AG04449 (cell line): ENCODE measurements at regions of chr4 and their contacts with region 1.

Region 1: DNA sequence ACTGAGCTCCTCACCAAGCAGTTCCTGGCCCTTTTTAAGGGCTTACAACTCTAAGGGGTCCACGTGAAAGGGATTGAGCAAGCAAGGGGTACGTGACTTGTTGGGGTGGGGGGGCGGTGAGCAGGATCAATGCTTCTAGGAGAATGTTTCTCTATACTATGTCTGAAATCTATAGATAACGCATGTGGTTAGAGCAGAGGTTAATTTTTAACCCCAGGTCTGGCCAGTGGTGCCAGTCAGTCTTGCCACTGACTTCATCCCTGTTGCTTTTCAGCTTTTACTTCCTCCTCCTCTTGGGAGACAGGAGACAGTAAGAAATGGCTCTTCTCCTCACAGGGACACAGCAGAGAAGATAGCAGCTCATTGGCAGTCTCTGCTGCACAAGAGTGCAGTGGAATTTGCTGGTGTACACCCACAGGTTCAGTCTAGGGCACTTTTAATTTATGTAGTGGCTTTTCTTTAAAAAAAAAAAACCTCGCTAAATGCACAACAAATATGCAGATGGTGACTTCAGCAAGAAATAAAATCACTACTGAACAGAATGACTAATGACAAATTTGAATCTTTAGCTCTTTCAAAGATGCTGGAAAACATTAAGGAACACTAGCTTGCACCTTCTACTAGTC is 190.4 kb downstream of the CCNG2 start:
- DNase-seq: no peak
- H3K4me3 ChIP-seq: no peak overlapping the region
- CTCF ChIP-seq: no peak

Region 2: DNA sequence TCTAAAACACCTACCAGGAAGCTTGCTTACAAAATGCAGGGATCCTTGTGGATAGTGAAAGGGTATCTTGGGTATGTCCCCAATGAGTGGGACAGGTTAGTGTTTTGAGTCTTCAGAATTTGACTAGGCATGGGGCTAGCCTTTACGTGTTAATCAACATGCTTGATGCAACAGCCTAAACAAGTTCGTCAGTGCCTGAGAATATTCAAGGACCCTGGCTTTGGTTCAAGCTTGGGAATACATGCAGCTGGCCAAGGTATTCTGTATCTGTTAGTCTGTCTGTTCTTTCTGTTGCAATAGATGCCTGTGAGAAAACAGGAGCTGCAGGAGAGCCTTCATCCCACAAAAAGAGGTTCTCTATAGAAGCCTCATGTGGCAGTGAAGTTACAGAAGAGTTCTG is 41.0 kb before region 1 on chr4:
- CTCF ChIA-PET with region 1: no interaction called
- POLR2A ChIA-PET with region 1: no interaction called
- DNase-seq: no peak
- H3K4me3 ChIP-seq: no peak overlapping the region
- CTCF ChIP-seq: no peak

Region 3: DNA sequence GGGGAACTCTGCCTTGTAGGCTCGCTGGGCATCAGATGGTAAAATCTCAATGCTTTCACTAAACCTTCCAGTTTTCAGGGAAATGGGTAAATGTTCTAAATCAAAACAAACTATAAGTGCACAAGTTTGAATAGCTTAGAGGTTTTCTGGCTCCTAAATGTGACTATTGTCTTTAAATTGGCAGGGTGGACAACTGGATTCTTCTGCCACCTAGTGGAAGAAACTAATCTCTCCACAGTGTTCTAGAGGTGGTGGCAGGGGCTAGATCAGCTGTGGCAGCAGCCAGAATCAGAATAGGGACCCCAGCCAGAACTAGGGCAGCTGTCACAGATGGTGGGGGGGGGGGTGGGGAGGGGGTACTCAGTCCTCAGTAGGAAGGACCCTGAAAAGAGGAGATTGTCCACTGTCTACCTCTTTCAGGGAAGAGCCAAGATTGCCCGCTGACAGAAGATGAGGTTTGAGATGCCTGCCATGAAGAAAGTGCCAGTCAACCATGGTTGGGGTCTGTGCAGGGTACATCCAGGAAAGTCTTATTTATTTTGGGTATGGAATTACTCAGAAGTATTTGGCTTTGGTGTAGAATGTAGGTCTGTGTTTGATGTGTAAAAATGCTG is 11.0 kb after region 1 on chr4:
- CTCF ChIA-PET with region 1: interaction called, 14 read pairs
- POLR2A ChIA-PET with region 1: no interaction called
- DNase-seq: no peak
- H3K4me3 ChIP-seq: no peak overlapping the region
- CTCF ChIP-seq: peak; percentile 58

Region 4: GRCh38 chr4:78293821-78294301 is 946.4 kb after region 1 on chr4:
- CTCF ChIA-PET with region 1: no interaction called
- POLR2A ChIA-PET with region 1: no interaction called
- DNase-seq: peak; percentile 91
- H3K4me3 ChIP-seq: no peak overlapping the region
- CTCF ChIP-seq: peak; percentile 48